Sigmoid colon (tissue), 7 donors: ENCODE measurements at regions of chr4 and their contacts with region 1.

Region 1: GRCh38 chr4:183444214-183445066 is at the start of gene CDKN2AIP:
- DNase-seq: peak; percentile 96
- H3K4me3 ChIP-seq: peak within 1 kb of the TSS; percentile 85 to 95 (median 93)
- H3K27ac ChIP-seq: peak within 1 kb of the TSS; percentile 97 to 99 (median 98)
- H3K4me1 ChIP-seq: peaks cover 0 to 51% (median 37%) of the 10 kb centered on the region in 4 donors
- H3K27me3 ChIP-seq: no peaks in the 10 kb centered on the region
- CTCF ChIP-seq: peak in 1 of 4 experiments; percentile 4
- EP300 ChIP-seq: peak in 1 of 4 donors; percentile 1
- POLR2A ChIP-seq: peak; percentile 90 to 93
- total RNA-seq, gene CDKN2AIP: 17.7 to 35.0 (median 27.4) TPM

Region 2: DNA sequence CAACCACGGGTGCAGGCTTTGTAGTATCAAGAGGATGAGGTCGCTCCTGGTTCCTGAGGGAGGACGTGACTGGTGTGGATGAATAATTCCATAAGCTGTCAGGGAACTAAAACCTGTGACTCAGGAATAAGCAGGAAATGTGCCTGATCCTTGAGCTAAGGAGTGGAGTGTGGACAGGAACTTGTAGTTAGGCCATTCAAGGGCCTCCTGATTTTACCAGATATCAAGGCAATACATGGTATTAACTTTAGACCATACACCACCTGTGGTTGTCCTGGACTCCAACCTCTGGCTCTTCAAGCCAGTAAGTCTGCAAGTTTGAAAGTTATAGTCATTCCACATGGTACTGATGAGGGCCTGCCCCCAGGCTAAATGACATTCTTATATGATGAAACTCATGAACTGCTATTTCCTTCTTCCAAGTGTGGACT is 48.4 kb after region 1 on chr4:
- intact Hi-C with region 1: no loop called
- DNase-seq: no peak
- H3K4me3 ChIP-seq: no peak overlapping the region
- H3K27ac ChIP-seq: no peak overlapping the region
- H3K4me1 ChIP-seq: no peaks in the 10 kb centered on the region
- H3K27me3 ChIP-seq: no peaks in the 10 kb centered on the region
- CTCF ChIP-seq: no peak
- EP300 ChIP-seq: no peak
- POLR2A ChIP-seq: no peak

Region 3: DNA sequence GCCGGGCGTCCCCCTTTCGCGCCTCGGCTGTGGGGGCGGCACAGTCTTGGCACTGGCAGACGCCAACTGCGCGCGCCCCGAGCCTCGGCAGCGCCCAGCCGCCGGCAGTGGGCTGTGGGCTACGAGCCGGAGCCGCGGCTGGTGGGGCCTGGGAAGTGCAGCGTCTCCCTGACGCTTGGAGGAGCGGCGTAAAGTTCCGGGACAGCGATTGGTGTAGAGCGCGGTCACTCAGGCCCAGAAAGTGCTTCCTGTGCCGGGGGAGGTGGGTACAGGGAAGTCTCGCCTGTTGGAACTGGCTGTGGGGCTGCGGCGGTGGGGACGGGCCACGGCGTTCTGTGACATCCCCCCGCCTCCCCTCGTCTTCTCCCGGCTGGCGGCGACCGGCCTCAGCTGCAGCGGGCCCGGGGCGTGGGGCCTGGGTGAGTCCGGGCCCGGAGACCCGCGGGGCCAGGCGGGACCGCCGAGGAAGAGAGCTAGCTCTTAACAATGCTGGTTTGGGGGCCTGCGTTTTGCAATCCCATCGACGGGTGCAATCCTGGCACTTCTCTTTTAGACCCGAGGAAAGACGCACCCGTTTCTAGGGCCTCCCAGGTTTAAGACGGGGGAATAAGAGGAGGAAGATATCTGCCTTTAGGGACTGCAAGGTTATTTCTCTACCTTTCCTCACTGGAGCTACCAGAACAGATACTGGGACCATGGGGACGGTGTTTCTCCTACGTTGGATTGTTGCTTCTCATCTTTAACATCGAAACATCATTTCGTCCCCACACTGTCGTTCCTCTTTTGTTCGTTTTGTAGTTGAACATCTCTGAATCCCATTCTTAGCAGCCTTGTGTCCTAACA is 214.8 kb after region 1 on chr4 and contains the starts of genes RWDD4 and TRAPPC11:
- intact Hi-C with region 1: loop called (anchors 2 kb)
- DNase-seq: peak; percentile 99
- H3K4me3 ChIP-seq: peak within 1 kb of the TSS; percentile 71 to 96 (median 93)
- H3K27ac ChIP-seq: peak within 1 kb of the TSS; percentile 90 to 96 (median 94)
- H3K4me1 ChIP-seq: peaks cover 0 to 29% (median 26%) of the 10 kb centered on the region in 4 donors
- H3K27me3 ChIP-seq: no peaks in the 10 kb centered on the region
- CTCF ChIP-seq: peak in 3 of 4 experiments; percentile 18 to 44 (median 33)
- EP300 ChIP-seq: no peak
- POLR2A ChIP-seq: peak; percentile 84 to 85
- total RNA-seq, gene RWDD4: 18.0 to 28.5 (median 21.7) TPM
- total RNA-seq, gene TRAPPC11: 32.1 to 58.2 (median 39.9) TPM